ENCODE measurements at regions of chr5 and their contacts with region 1.

Region 1: DNA sequence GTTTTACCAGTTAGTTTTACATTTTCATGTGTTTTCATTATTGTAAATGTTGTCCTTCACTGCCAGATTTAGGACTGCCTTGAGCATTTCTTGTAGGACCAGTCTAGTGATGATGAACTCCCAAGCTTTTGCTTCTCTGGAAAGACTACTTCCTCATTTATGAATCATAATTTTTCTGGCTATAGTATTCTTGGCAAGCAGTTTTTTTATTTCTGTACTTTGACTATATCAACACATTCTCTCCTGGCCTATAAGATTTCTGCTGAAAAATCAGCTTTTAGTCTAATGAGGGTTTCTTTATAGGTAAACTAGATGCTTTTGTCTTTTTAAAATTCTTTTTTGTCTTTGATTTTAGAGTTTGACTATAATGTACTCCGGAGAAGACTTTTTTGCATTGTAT is 256.8 kb upstream of the GRAMD2B start:
- DNase-seq: no peak
- ATAC-seq: no peak
- H3K4me3 ChIP-seq: no peak overlapping the region
- H3K4me3 Mint-ChIP-seq: no peak overlapping the region
- H3K27ac ChIP-seq: no peak overlapping the region
- H3K27ac Mint-ChIP-seq: no peak overlapping the region
- H3K4me1 ChIP-seq: no peaks in the 10 kb centered on the region
- H3K4me1 Mint-ChIP-seq: no peaks in the 10 kb centered on the region
- H3K27me3 ChIP-seq: no peaks in the 10 kb centered on the region
- H3K27me3 Mint-ChIP-seq: no peaks in the 10 kb centered on the region

Region 2: DNA sequence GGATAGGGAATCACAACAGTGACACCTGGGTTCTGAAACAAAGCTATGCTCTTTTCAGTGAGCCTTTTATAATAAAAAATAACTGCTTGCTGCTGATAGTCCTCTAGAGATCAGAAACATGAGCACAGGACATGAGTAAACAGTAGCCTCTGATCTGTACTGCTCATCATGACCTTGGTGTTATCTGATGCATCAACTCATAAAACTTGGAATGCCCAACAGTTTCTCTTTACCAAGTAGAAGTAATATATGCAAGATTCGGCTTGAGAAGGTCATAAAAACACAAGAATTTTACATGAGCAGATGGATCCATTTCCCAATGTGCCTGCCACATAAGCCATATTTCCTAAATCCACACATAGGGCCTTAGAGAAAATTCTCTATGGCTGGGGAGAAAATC is 61.4 kb before region 1 on chr5:
- CTCF ChIA-PET with region 1: no interaction called
- POLR2A ChIA-PET with region 1: no interaction called
- intact Hi-C with region 1: loop called in 1 of 2 experiments (anchors 2 kb)
- DNase-seq: no peak
- ATAC-seq: no peak
- H3K4me3 ChIP-seq: no peak overlapping the region
- H3K4me3 Mint-ChIP-seq: no peak overlapping the region
- H3K27ac ChIP-seq: no peak overlapping the region
- H3K27ac Mint-ChIP-seq: no peak overlapping the region
- H3K4me1 ChIP-seq: no peaks in the 10 kb centered on the region
- H3K4me1 Mint-ChIP-seq: no peaks in the 10 kb centered on the region
- H3K27me3 ChIP-seq: no peaks in the 10 kb centered on the region
- H3K27me3 Mint-ChIP-seq: no peaks in the 10 kb centered on the region